ENCODE measurements at regions of chr13 and their contacts with region 1.

Region 1: GRCh38 chr13:45718063-45718462 is 15.9 kb downstream of the CBY2 start:
- DNase-seq: peak; percentile 49
- H3K4me3 Mint-ChIP-seq: no peak overlapping the region
- H3K27ac Mint-ChIP-seq: no peak overlapping the region
- H3K4me1 Mint-ChIP-seq: no peaks in the 10 kb centered on the region
- H3K27me3 Mint-ChIP-seq: peaks cover 26% of the 10 kb centered on the region
- CTCF ChIP-seq: peak; percentile 58

Region 2: DNA sequence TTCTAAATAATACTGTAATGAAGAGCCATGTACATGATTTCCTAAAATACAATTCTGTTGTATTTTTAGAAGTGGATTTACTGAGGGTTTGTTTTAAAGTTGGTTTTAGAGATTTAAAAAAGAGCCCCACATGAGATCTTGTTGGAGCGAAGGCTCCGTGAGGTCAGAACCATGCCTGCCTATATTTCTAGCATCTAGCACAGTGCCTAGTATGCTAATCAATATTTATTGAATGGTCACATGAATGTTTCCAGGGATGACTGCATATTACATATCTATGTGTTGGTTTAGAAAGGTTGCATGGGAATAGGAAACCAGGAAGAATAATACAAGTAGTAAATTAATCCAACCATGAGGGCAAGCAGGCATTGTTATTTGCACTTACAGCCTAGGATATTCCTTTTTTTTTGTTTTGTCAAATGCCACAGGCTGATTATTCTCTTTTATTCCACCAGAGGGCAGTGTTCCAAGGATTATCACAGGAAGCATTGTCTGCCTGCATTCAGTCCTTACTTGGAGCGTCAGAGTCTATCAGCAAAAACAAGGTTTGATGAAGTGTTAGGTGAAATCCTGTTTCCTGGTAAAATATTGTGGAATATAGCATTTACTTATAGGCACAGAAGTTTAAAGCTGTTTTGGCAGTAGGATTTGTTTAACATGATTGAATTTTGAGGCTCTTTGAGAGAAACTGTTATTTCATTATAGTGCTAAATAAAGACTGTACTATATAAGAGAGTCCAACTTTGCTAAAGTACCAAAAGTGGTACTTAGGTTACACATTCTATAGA is 206.6 kb before region 1 on chr13:
- CTCF ChIA-PET with region 1: interaction called, 3 read pairs
- POLR2A ChIA-PET with region 1: no interaction called
- intact Hi-C with region 1: loop called (anchors 2 kb)
- DNase-seq: peak; percentile 71
- H3K4me3 Mint-ChIP-seq: no peak overlapping the region
- H3K27ac Mint-ChIP-seq: no peak overlapping the region
- H3K4me1 Mint-ChIP-seq: peaks cover 6% of the 10 kb centered on the region
- H3K27me3 Mint-ChIP-seq: no peaks in the 10 kb centered on the region
- CTCF ChIP-seq: peak; percentile 69

Region 3: DNA sequence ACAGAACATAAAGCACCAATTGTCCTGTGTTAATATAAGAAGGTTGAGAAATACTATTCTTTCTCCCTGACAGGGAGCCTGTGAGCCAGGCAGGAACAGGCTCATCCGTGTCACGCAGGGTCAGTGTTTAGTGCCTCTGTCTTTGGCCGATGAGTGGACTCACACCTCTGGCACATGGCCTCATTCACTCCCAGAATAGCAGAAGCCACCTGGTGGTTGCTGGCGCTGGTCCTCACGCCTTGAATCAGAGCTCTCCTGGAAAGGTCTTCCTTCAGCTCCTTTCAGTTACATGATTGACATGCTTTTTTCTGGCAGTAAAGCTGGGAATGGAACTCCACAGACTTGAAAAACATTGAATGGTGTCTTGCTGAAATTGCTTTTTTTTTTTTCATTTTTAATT is 161.6 kb after region 1 on chr13:
- CTCF ChIA-PET with region 1: no interaction called
- POLR2A ChIA-PET with region 1: no interaction called
- intact Hi-C with region 1: no loop called
- DNase-seq: peak; percentile 76
- H3K4me3 Mint-ChIP-seq: no peak overlapping the region
- H3K27ac Mint-ChIP-seq: no peak overlapping the region
- H3K4me1 Mint-ChIP-seq: peaks cover 6% of the 10 kb centered on the region
- H3K27me3 Mint-ChIP-seq: peaks cover 5% of the 10 kb centered on the region
- CTCF ChIP-seq: peak; percentile 40

Region 4: DNA sequence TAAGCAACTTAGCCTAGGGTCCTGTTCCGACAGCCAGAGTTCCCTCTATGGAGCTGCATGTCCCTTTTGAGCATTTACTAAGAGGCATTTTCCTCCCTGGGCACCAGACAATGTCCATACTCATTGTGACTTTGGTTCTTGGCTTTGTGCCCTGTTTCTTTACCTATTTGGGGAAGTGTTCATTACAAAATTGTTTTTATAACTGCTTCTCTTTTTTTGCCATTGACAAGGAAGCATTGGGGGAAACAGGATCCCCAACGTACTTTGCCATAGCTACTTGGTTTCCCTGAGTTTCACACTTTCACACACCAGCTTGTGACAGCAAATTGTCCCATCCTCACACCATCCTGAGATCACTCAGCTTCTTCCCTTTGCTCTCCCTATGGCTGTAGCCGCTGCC is 214.6 kb after region 1 on chr13:
- CTCF ChIA-PET with region 1: no interaction called
- POLR2A ChIA-PET with region 1: no interaction called
- intact Hi-C with region 1: no loop called
- DNase-seq: no peak
- H3K4me3 Mint-ChIP-seq: no peak overlapping the region
- H3K27ac Mint-ChIP-seq: no peak overlapping the region
- H3K4me1 Mint-ChIP-seq: peaks cover 6% of the 10 kb centered on the region
- H3K27me3 Mint-ChIP-seq: peaks cover 61% of the 10 kb centered on the region
- CTCF ChIP-seq: no peak

Measured in MCF 10A (cell line).